CD8-positive, alpha-beta T cell (primary cell): ENCODE measurements at regions of chr6 and their contacts with region 1.

Region 1: DNA sequence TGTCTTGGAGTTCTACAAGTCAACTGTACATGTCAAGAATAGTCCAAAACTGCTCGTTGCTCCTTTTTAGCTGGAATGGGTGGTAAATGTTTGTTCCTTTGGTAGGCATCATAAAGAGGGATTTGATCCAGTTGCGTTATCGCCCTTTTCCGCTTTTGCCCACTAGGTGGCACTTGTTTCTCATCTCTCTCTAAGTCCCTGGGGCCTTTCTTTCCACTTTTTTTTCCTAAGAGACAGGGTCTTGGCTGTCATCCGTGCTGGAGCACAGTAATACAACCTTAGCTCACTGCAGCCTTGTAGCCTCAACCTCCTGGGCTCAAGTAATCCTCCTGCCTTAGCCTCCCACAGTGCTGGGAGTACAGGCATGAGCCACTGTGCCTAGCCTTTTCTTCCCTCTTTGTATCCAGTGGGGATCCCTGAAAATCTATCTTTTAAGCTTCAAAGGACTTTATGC is 20.7 kb downstream of the GTPBP2 start:
- DNase-seq: peak; percentile 23 to 75 (median 61)
- ATAC-seq: peak; percentile 38
- H3K4me3 ChIP-seq: no peak overlapping the region
- H3K4me3 Mint-ChIP-seq: no peak overlapping the region
- H3K27ac ChIP-seq: no peak overlapping the region
- H3K27ac Mint-ChIP-seq: no peak overlapping the region
- H3K4me1 ChIP-seq: no peaks in the 10 kb centered on the region
- H3K4me1 Mint-ChIP-seq: peaks cover 3% of the 10 kb centered on the region
- H3K27me3 ChIP-seq: no peaks in the 10 kb centered on the region
- H3K27me3 Mint-ChIP-seq: no peaks in the 10 kb centered on the region
- CTCF ChIP-seq: peak; percentile 63

Region 2: GRCh38 chr6:43593938-43594337 is 14.4 kb before region 1 on chr6:
- CTCF ChIA-PET with region 1: interaction called, 15 read pairs
- POLR2A ChIA-PET with region 1: interaction called, 3 read pairs
- intact Hi-C with region 1: no loop called
- DNase-seq: no peak
- ATAC-seq: no peak
- H3K4me3 ChIP-seq: no peak overlapping the region
- H3K4me3 Mint-ChIP-seq: no peak overlapping the region
- H3K27ac ChIP-seq: no peak overlapping the region
- H3K27ac Mint-ChIP-seq: no peak overlapping the region
- H3K4me1 ChIP-seq: no peaks in the 10 kb centered on the region
- H3K4me1 Mint-ChIP-seq: peaks cover 2% of the 10 kb centered on the region
- H3K27me3 ChIP-seq: no peaks in the 10 kb centered on the region
- H3K27me3 Mint-ChIP-seq: no peaks in the 10 kb centered on the region
- CTCF ChIP-seq: no peak

Region 3: DNA sequence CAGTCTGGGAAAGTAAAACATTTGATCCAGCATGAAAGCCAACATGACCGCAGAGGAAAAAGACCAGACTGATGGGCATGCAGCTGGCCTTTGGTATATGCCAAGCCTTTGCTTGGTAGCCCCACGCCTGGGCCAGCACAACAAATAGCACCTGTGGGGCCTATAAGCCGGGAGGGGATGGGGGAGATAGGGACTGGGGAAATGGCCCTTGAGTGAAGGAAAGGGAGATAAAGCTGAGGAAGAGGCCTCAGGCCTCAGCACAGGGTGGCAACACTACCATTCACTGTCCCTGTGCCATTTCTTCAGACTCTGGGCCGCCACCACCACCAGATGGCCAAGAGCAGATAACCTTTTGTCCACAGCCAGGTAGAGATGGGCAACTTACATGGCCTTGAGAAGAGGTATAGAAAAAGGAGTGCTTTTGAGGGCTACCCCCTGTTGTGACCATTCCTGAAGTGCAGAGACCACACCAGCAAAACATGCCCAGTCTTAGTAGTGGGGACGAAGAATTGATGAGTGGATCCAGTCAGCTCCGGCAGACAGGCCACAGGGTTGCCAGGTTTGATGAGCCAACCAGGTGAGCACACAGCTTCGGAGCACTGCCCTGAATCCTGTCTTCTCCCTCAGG is 12.6 kb after region 1 on chr6:
- CTCF ChIA-PET with region 1: interaction called, 24 read pairs
- POLR2A ChIA-PET with region 1: no interaction called
- intact Hi-C with region 1: no loop called
- DNase-seq: no peak
- ATAC-seq: no peak
- H3K4me3 ChIP-seq: no peak overlapping the region
- H3K4me3 Mint-ChIP-seq: no peak overlapping the region
- H3K27ac ChIP-seq: no peak overlapping the region
- H3K27ac Mint-ChIP-seq: peak overlapping the region; percentile 60
- H3K4me1 ChIP-seq: no peaks in the 10 kb centered on the region
- H3K4me1 Mint-ChIP-seq: peaks cover 2% of the 10 kb centered on the region
- H3K27me3 ChIP-seq: no peaks in the 10 kb centered on the region
- H3K27me3 Mint-ChIP-seq: no peaks in the 10 kb centered on the region
- CTCF ChIP-seq: no peak

Region 4: DNA sequence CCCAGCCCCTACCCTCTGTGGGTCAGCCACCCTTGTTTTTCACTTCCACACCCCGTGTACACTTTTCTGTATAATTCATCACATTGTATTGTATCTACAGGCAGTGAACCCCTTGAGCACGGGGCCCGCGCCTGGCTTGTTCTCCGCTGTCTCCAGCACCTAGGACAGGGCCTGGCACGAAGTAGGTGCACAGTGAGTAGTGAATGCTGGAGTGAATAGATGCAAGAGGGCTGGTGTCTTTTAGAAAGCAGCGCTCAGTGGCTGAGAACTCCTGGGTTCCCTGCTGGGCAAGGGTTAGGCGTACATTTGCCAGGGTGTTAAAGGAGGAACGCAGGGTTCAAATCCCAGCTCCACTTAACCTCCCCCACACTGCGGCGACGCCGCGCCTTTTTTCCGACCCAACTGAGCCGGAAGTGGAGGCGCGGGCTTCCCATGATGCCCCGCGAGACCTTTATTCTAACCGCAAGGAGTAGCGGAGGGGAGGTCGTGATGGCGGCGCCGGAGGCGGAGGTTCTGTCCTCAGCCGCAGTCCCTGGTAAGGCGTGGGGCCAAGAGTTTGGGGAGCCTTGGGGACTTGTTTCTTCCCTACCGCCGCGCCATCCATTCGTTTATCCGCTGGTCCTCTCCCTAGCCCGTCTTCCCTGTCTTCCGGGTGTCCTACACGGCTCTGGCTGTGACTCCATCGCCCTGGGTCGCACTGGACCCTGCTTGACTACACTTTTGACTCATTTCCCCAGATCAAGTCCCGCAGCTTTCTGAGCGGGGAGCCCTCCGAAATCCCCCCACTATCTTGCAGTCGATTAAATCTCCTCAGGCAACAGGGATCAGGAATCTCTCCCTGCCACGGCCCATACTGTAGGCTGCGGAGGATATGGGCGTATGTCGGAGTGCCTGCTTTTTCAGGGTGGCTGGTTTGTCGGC is 27.3 kb after region 1 on chr6 and contains the start of gene MAD2L1BP:
- CTCF ChIA-PET with region 1: interaction called, 13 read pairs
- POLR2A ChIA-PET with region 1: no interaction called
- intact Hi-C with region 1: no loop called
- DNase-seq: peak; percentile 66 to 90 (median 86)
- ATAC-seq: peak; percentile 88
- H3K4me3 ChIP-seq: peak within 1 kb of the TSS; percentile 79 to 96
- H3K4me3 Mint-ChIP-seq: peak within 1 kb of the TSS; percentile 98
- H3K27ac ChIP-seq: peak within 1 kb of the TSS; percentile 76 to 84
- H3K27ac Mint-ChIP-seq: peak within 1 kb of the TSS; percentile 94
- H3K4me1 ChIP-seq: peaks cover 32% of the 10 kb centered on the region
- H3K4me1 Mint-ChIP-seq: peaks cover 53% of the 10 kb centered on the region
- H3K27me3 ChIP-seq: no peaks in the 10 kb centered on the region
- H3K27me3 Mint-ChIP-seq: no peaks in the 10 kb centered on the region
- CTCF ChIP-seq: no peak
- total RNA-seq, gene MAD2L1BP: 29.2 TPM